ENCODE measurements at regions of chr16 and their contacts with region 1.

Region 1: GRCh38 chr16:30984669-30985400 is at the start of gene HSD3B7:
- DNase-seq: peak; percentile 91 to 94
- H3K4me3 ChIP-seq: peak within 1 kb of the TSS; percentile 47 to 52 (median 48)
- H3K27ac ChIP-seq: peak within 1 kb of the TSS; percentile 62 to 80 (median 78)
- H3K4me1 ChIP-seq: peaks cover 10 to 16% (median 13%) of the 10 kb centered on the region in 4 donors
- H3K27me3 ChIP-seq: no peaks in the 10 kb centered on the region
- CTCF ChIP-seq: peak in 5 of 7 experiments; percentile 87 to 96 (median 94)
- EP300 ChIP-seq: no peak
- POLR2A ChIP-seq: no peak
- total RNA-seq, gene HSD3B7: 2.9 to 52.7 (median 13.4) TPM

Region 2: DNA sequence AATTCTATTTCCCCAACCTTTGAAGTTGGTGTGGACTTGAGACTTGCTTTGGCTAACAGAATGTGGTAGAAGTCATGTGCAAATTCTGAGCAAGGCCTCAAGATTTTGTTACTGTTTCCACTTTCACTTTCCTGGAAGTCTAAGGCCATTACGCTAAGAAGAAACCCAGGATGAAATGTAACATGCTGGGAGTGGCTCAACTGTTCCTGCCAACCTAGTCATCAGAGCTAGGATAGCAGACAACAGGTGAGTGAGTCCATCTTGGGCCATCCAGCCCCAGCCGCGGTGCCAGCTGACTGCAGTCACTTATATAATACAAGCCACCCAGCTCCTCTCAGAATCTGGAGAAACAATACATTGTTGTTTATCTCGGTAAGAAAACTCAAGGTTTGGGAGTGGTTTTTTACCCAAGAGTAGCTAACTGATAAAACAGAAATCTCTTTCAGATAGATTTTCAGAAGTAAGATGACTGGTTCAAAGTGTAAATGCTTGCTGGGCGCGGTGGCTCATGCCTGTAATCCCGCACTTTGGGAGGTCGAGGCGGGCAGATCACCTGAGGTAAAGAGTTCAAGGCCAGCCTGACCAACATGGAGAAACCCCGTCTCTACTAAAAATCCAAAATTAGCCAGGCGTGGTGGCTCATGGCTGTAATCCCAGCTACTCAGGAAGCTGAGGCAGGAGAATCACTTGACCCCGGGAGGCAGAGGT is 37.9 kb after region 1 on chr16:
- intact Hi-C with region 1: no loop called
- DNase-seq: no peak
- H3K4me3 ChIP-seq: no peak overlapping the region
- H3K27ac ChIP-seq: peak overlapping the region in 1 of 5 donors; percentile 38
- H3K4me1 ChIP-seq: peaks cover 0 to 14% (median 4%) of the 10 kb centered on the region in 4 donors
- H3K27me3 ChIP-seq: peaks cover 0 to under 1% (median 0%) of the 10 kb centered on the region in 3 donors
- CTCF ChIP-seq: no peak
- EP300 ChIP-seq: no peak
- POLR2A ChIP-seq: no peak

Region 3: DNA sequence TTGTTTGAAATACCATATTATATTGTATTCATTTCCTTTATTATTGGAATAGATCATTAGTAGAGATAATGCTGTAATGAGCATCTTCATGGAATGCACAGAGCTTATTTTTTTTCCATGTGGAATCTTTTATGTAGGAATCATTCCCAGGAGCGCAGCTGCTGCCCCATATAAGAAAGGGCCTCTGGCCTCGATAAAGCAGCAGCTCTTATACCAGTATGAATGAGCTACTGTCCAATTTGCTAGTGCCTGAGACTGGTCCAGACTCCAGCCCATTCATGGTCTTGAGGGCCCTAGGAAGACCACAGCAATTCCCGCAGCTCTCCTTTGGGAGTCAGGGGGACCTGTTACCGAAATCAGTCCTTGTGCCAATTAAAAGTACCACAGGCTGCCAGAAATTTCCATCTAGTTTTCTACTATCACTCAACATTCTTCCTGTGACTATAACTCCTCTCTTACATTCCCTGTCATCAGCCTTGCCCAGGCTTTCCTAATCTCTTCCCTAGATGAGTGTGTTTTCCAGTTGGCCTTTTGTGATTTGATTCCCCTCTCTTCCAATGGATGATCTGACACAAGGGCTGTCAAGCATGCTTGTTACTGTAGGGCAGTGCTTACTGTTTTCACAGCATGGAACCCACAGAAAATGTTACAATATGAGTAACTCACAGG is 455.8 kb after region 1 on chr16:
- intact Hi-C with region 1: loop called (anchors 5 kb)
- DNase-seq: no peak
- H3K4me3 ChIP-seq: no peak overlapping the region
- H3K27ac ChIP-seq: no peak overlapping the region
- H3K4me1 ChIP-seq: peaks cover 5 to 13% (median 12%) of the 10 kb centered on the region in 4 donors
- H3K27me3 ChIP-seq: no peaks in the 10 kb centered on the region
- CTCF ChIP-seq: no peak
- EP300 ChIP-seq: no peak
- POLR2A ChIP-seq: no peak

Measured in stomach (tissue), 19 donors.